Activated CD4-positive, alpha-beta T cell treated with anti-CD3 and anti-CD28 coated beads for 36 hours (primary cell): ENCODE measurements at regions of chr6 and their contacts with region 1.

Region 1: GRCh38 chr6:28080631-28081485 is 490 bp downstream of the ZNF165 start:
- DNase-seq: peak; percentile 93
- ATAC-seq: peak; percentile 84
- H3K4me3 Mint-ChIP-seq: peak overlapping the region; percentile 93
- H3K27ac Mint-ChIP-seq: peak overlapping the region; percentile 97
- H3K4me1 Mint-ChIP-seq: peaks cover 29% of the 10 kb centered on the region
- H3K27me3 Mint-ChIP-seq: no peaks in the 10 kb centered on the region

Region 2: GRCh38 chr6:27902335-27903314 is 178.2 kb before region 1 on chr6:
- CTCF ChIA-PET with region 1: no interaction called
- POLR2A ChIA-PET with region 1: no interaction called
- intact Hi-C with region 1: loop called (anchors 2 to 10 kb)
- DNase-seq: peak; percentile 91
- ATAC-seq: peak; percentile 81
- H3K4me3 Mint-ChIP-seq: peak overlapping the region; percentile 74
- H3K27ac Mint-ChIP-seq: peak overlapping the region; percentile 89
- H3K4me1 Mint-ChIP-seq: peaks cover 5% of the 10 kb centered on the region
- H3K27me3 Mint-ChIP-seq: peaks cover 4% of the 10 kb centered on the region

Region 3: GRCh38 chr6:28252009-28252975 is 171.4 kb after region 1 on chr6 and contains the start of gene ZKSCAN4:
- CTCF ChIA-PET with region 1: no interaction called
- POLR2A ChIA-PET with region 1: no interaction called
- intact Hi-C with region 1: loop called in 1 of 2 experiments (anchors 5 kb)
- DNase-seq: peak; percentile 85
- ATAC-seq: peak; percentile 83
- H3K4me3 Mint-ChIP-seq: peak within 1 kb of the TSS; percentile 99
- H3K27ac Mint-ChIP-seq: peak within 1 kb of the TSS; percentile 96
- H3K4me1 Mint-ChIP-seq: peaks cover 14% of the 10 kb centered on the region
- H3K27me3 Mint-ChIP-seq: peaks cover 1% of the 10 kb centered on the region
- total RNA-seq, gene ZKSCAN4: 3.2 to 4.1 TPM

Region 4: GRCh38 chr6:28349892-28350737 is 269.3 kb after region 1 on chr6 and contains the start of gene ZKSCAN3:
- CTCF ChIA-PET with region 1: no interaction called
- POLR2A ChIA-PET with region 1: no interaction called
- intact Hi-C with region 1: loop called in 1 of 2 experiments (anchors 1 kb)
- DNase-seq: peak; percentile 94
- ATAC-seq: peak; percentile 100
- H3K4me3 Mint-ChIP-seq: peak within 1 kb of the TSS; percentile 96
- H3K27ac Mint-ChIP-seq: peak within 1 kb of the TSS; percentile 93
- H3K4me1 Mint-ChIP-seq: peaks cover 22% of the 10 kb centered on the region
- H3K27me3 Mint-ChIP-seq: peaks cover 7% of the 10 kb centered on the region
- total RNA-seq, gene ZKSCAN3: 2.2 to 3.1 TPM

Region 5: GRCh38 chr6:28443112-28443773 is 362.4 kb after region 1 on chr6 and contains the start of gene ZSCAN23:
- CTCF ChIA-PET with region 1: no interaction called
- POLR2A ChIA-PET with region 1: no interaction called
- intact Hi-C with region 1: loop called in 1 of 2 experiments (anchors 2 kb)
- DNase-seq: peak; percentile 91
- ATAC-seq: peak; percentile 92
- H3K4me3 Mint-ChIP-seq: peak within 1 kb of the TSS; percentile 96
- H3K27ac Mint-ChIP-seq: peak within 1 kb of the TSS; percentile 91
- H3K4me1 Mint-ChIP-seq: peaks cover 32% of the 10 kb centered on the region
- H3K27me3 Mint-ChIP-seq: peaks cover 16% of the 10 kb centered on the region
- total RNA-seq, gene ZSCAN23: 1.9 to 2.9 TPM